GM12878 (cell line): ENCODE measurements at regions of chr13 and their contacts with region 1.

Region 1: GRCh38 chr13:98570929-98571372 is 6.0 kb downstream of the STK24 start:
- DNase-seq: peak; percentile 92
- ATAC-seq: peak; percentile 83
- H3K4me3 ChIP-seq: peak overlapping the region; percentile 87
- H3K27ac ChIP-seq: peak overlapping the region; percentile 73
- H3K4me1 ChIP-seq: peaks cover 42% of the 10 kb centered on the region
- H3K27me3 ChIP-seq: no peaks in the 10 kb centered on the region
- CTCF ChIP-seq: no peak
- EP300 ChIP-seq: peak; percentile 29 to 40; a peak in 2 of 4 replicates
- POLR2A ChIP-seq: no peak
- RAD21 ChIP-seq: no peak

Region 2: DNA sequence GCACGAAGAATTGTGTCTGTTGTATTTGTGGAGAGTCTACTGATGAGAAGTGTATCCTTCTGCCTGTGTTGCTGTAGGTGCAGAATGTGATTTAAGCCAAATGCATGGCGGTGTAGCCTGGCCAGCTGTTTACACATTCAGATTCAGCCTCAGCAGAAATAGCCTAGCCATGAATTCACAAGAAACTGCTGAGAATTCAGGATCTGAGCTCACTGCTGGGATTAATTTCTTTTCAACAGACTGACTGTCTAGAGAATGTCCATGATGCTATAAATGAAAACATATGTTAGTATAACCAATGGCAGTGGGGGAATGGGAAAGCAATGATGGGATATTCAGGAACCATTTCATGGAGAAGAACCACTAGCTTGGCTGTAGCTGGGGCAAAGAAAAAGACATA is 316.4 kb before region 1 on chr13:
- CTCF ChIA-PET with region 1: no interaction called
- POLR2A ChIA-PET with region 1: no interaction called
- RAD21 ChIA-PET with region 1: no interaction called
- SMC1A ChIA-PET with region 1: no interaction called
- in situ Hi-C with region 1: no loop called
- intact Hi-C with region 1: no loop called
- DNase-seq: no peak
- ATAC-seq: no peak
- H3K4me3 ChIP-seq: no peak overlapping the region
- H3K27ac ChIP-seq: no peak overlapping the region
- H3K4me1 ChIP-seq: no peaks in the 10 kb centered on the region
- H3K27me3 ChIP-seq: no peaks in the 10 kb centered on the region
- CTCF ChIP-seq: no peak
- EP300 ChIP-seq: no peak
- POLR2A ChIP-seq: no peak
- RAD21 ChIP-seq: no peak

Region 3: DNA sequence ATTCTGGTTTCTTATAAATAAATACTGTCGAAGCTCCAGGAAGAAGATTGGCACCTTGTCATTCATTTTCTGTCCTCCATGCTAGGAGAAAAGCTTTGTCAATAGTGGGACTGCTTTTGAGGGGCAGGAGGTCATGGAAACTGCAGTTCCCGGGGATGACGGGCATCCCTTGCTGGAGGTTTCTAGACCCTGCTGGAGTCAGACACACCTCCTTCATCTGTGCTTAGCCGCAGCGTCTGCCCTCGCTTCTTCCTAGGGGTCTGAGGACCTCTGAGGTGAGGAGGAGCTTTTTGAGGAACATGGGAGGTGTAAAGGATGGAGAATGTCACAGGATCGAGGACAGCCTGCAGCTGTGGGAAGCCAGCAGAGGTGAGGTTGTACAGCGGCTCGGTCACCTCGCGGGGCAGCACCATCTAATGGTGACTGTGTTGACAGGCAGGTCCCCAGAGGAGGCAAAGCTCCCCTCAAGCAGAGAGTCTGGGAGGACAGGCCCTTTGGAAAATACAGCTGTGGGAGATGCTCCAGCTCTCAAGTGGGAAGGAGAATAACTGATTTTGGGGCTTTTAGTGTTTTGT is 221.1 kb before region 1 on chr13:
- CTCF ChIA-PET with region 1: no interaction called
- POLR2A ChIA-PET with region 1: no interaction called
- RAD21 ChIA-PET with region 1: no interaction called
- SMC1A ChIA-PET with region 1: no interaction called
- in situ Hi-C with region 1: no loop called
- intact Hi-C with region 1: no loop called
- DNase-seq: no peak
- ATAC-seq: peak; percentile 71
- H3K4me3 ChIP-seq: no peak overlapping the region
- H3K27ac ChIP-seq: no peak overlapping the region
- H3K4me1 ChIP-seq: no peaks in the 10 kb centered on the region
- H3K27me3 ChIP-seq: no peaks in the 10 kb centered on the region
- CTCF ChIP-seq: peak; percentile 13 to 38 (median 33); a peak in 3 of 6 replicates
- EP300 ChIP-seq: no peak
- POLR2A ChIP-seq: no peak
- RAD21 ChIP-seq: no peak

Region 4: GRCh38 chr13:98476538-98476966 is 94.4 kb before region 1 on chr13:
- CTCF ChIA-PET with region 1: no interaction called
- POLR2A ChIA-PET with region 1: interaction called, 4 read pairs
- RAD21 ChIA-PET with region 1: interaction called, 10 read pairs
- SMC1A ChIA-PET with region 1: interaction called, 8 read pairs
- in situ Hi-C with region 1: no loop called
- intact Hi-C with region 1: loop called (anchors 2 kb)
- DNase-seq: peak; percentile 90
- ATAC-seq: peak; percentile 94
- H3K4me3 ChIP-seq: peak overlapping the region; percentile 13; the same call in 1 of the 2 replicates
- H3K27ac ChIP-seq: peak overlapping the region; percentile 67
- H3K4me1 ChIP-seq: peaks cover 44% of the 10 kb centered on the region
- H3K27me3 ChIP-seq: no peaks in the 10 kb centered on the region
- CTCF ChIP-seq: no peak
- EP300 ChIP-seq: peak; percentile 96 to 97
- POLR2A ChIP-seq: peak; percentile 70
- RAD21 ChIP-seq: 0 out of 2 replicates have a peak, but pooled peaks have one; percentile 1

Region 5: GRCh38 chr13:98484289-98485219 is 86.4 kb before region 1 on chr13:
- CTCF ChIA-PET with region 1: interaction called, 6 read pairs
- POLR2A ChIA-PET with region 1: interaction called, 10 read pairs
- RAD21 ChIA-PET with region 1: interaction called, 10 read pairs
- SMC1A ChIA-PET with region 1: interaction called, 12 read pairs
- in situ Hi-C with region 1: no loop called
- intact Hi-C with region 1: no loop called
- DNase-seq: no peak
- ATAC-seq: peak; percentile 70
- H3K4me3 ChIP-seq: no peak overlapping the region
- H3K27ac ChIP-seq: peak overlapping the region; percentile 79
- H3K4me1 ChIP-seq: peaks cover 81% of the 10 kb centered on the region
- H3K27me3 ChIP-seq: no peaks in the 10 kb centered on the region
- CTCF ChIP-seq: no peak
- EP300 ChIP-seq: no peak
- POLR2A ChIP-seq: no peak
- RAD21 ChIP-seq: no peak

Region 6: GRCh38 chr13:98509271-98510155 is 61.4 kb before region 1 on chr13:
- CTCF ChIA-PET with region 1: interaction called, 21 read pairs
- POLR2A ChIA-PET with region 1: interaction called, 11 read pairs
- RAD21 ChIA-PET with region 1: interaction called, 35 read pairs
- SMC1A ChIA-PET with region 1: interaction called, 32 read pairs
- in situ Hi-C with region 1: no loop called
- intact Hi-C with region 1: loop called (anchors 1 kb)
- DNase-seq: peak; percentile 79
- ATAC-seq: peak; percentile 67
- H3K4me3 ChIP-seq: no peak overlapping the region
- H3K27ac ChIP-seq: peak overlapping the region; percentile 72
- H3K4me1 ChIP-seq: peaks cover 80% of the 10 kb centered on the region
- H3K27me3 ChIP-seq: no peaks in the 10 kb centered on the region
- CTCF ChIP-seq: no peak
- EP300 ChIP-seq: peak; percentile 49 to 72; a peak in 2 of 4 replicates
- POLR2A ChIP-seq: no peak
- RAD21 ChIP-seq: no peak

Region 7: DNA sequence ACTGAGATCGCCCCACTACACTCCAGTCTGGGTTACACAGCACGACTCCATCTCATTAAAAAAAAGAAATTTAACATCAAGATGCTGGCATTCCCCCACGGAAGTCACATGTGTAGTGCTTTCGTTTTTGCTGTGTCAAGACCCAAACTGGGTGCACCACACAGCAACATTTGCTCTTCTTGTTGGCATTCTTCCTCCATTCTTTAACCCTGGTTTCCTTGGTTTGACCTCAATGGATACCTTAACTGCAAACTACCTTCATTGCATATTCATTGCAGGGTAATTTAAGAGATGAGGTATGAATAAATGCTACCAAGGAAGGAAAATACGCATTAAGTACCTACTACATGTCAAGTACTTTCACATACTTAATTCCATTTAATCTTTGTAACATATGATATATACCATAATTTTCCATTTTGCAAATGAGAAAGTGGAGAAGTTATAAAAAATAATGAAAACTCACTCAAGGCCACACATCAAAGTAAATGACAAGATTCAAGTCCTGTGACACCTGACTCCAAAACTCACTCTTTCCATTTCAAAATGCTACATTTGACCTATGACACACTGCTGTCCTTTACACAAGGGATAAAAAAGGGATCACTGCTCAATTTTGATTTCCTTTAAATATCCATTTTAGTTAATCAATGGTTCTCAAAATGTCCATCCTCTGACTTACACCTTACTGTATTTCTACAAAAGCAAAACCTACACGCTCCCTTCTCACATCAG is 53.2 kb before region 1 on chr13:
- CTCF ChIA-PET with region 1: interaction called, 3 read pairs
- POLR2A ChIA-PET with region 1: interaction called, 7 read pairs
- RAD21 ChIA-PET with region 1: interaction called, 25 read pairs
- SMC1A ChIA-PET with region 1: interaction called, 17 read pairs
- in situ Hi-C with region 1: no loop called
- intact Hi-C with region 1: loop called (anchors 1 kb)
- DNase-seq: peak; percentile 66
- ATAC-seq: peak; percentile 64
- H3K4me3 ChIP-seq: no peak overlapping the region; the same call in 1 of the 2 replicates
- H3K27ac ChIP-seq: peak overlapping the region; percentile 71
- H3K4me1 ChIP-seq: peaks cover 64% of the 10 kb centered on the region
- H3K27me3 ChIP-seq: no peaks in the 10 kb centered on the region
- CTCF ChIP-seq: no peak
- EP300 ChIP-seq: peak in 1 of 2 experiments; percentile 64; a peak in 1 of 4 replicates
- POLR2A ChIP-seq: no peak
- RAD21 ChIP-seq: no peak

Region 8: GRCh38 chr13:98542568-98543377 is 28.2 kb before region 1 on chr13:
- CTCF ChIA-PET with region 1: no interaction called
- POLR2A ChIA-PET with region 1: no interaction called
- RAD21 ChIA-PET with region 1: interaction called, 10 read pairs
- SMC1A ChIA-PET with region 1: interaction called, 11 read pairs
- in situ Hi-C with region 1: no loop called
- intact Hi-C with region 1: no loop called
- DNase-seq: no peak
- ATAC-seq: peak; percentile 58
- H3K4me3 ChIP-seq: peak overlapping the region; percentile 63
- H3K27ac ChIP-seq: peak overlapping the region; percentile 82
- H3K4me1 ChIP-seq: peaks cover 59% of the 10 kb centered on the region
- H3K27me3 ChIP-seq: no peaks in the 10 kb centered on the region
- CTCF ChIP-seq: no peak
- EP300 ChIP-seq: no peak
- POLR2A ChIP-seq: no peak
- RAD21 ChIP-seq: no peak

Region 9: DNA sequence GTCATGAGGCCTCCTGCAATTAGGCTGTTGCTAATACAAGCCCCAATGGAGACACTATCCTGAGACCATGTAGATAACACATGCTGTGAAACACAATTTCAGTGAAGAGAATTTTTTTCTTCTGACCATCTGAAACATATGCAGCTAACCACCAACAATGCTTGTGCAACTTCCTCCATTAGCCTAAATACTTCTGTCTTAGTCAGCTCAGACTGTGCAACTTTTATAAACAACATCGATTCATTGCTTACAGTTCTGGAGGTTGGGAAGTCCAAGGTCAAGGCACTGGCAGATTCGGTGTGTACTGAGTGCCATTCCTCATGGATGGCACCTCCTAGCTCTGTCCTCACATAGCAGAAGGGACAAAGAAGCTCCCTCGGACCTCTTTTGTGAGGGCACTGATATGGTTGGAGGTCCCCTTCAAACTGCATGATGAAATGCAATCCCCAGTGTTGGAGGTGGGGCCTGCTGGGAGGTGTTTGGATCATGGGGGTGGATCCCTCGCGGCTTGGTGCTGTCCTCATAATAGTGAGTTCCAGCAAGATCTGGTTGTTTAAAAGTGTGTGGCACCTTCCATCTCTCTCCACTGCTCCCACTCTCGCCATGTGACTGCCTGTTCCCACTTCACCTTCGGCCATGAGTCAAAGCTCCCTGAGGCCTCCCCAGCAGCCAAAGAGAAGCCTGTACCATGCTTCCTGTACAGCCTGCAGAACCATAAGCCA is 21.8 kb before region 1 on chr13:
- CTCF ChIA-PET with region 1: interaction called, 3 read pairs
- POLR2A ChIA-PET with region 1: no interaction called
- RAD21 ChIA-PET with region 1: interaction called, 10 read pairs
- SMC1A ChIA-PET with region 1: interaction called, 12 read pairs
- in situ Hi-C with region 1: no loop called
- intact Hi-C with region 1: no loop called
- DNase-seq: no peak
- ATAC-seq: peak; percentile 44
- H3K4me3 ChIP-seq: no peak overlapping the region
- H3K27ac ChIP-seq: no peak overlapping the region; the same call in none of the 2 replicates
- H3K4me1 ChIP-seq: peaks cover 29% of the 10 kb centered on the region
- H3K27me3 ChIP-seq: no peaks in the 10 kb centered on the region
- CTCF ChIP-seq: no peak
- EP300 ChIP-seq: no peak
- POLR2A ChIP-seq: no peak
- RAD21 ChIP-seq: no peak

Region 10: GRCh38 chr13:98772794-98773452 is 202.0 kb after region 1 on chr13:
- CTCF ChIA-PET with region 1: no interaction called
- POLR2A ChIA-PET with region 1: no interaction called
- RAD21 ChIA-PET with region 1: no interaction called
- SMC1A ChIA-PET with region 1: no interaction called
- in situ Hi-C with region 1: no loop called
- intact Hi-C with region 1: no loop called
- DNase-seq: no peak
- ATAC-seq: no peak
- H3K4me3 ChIP-seq: no peak overlapping the region
- H3K27ac ChIP-seq: no peak overlapping the region
- H3K4me1 ChIP-seq: no peaks in the 10 kb centered on the region
- H3K27me3 ChIP-seq: no peaks in the 10 kb centered on the region
- CTCF ChIP-seq: no peak; a peak in 1 of 6 replicates
- EP300 ChIP-seq: no peak
- POLR2A ChIP-seq: no peak
- RAD21 ChIP-seq: no peak

Region 11: DNA sequence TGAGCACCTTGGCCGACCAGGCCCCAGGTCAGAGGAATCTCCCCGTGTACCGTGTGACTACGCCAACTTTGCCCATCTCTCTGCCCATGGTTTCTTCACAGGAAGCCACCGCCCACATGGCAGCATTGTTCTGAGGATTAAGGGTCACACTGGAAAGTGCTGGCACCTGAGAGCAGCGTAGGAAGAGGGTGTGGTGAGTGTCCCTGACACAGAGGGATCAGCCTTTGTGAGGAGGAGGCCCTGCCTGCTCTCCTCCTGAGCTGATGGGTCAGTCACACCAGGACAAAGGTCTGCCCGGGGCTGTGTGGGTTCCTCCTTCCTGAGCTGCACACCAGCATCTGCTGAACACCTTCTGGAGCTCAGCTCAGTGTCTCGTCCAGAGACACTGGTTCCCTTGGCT is 213.7 kb after region 1 on chr13:
- CTCF ChIA-PET with region 1: no interaction called
- POLR2A ChIA-PET with region 1: no interaction called
- RAD21 ChIA-PET with region 1: no interaction called
- SMC1A ChIA-PET with region 1: no interaction called
- in situ Hi-C with region 1: no loop called
- intact Hi-C with region 1: no loop called
- DNase-seq: no peak
- ATAC-seq: no peak; the same call in 2 of the 3 replicates
- H3K4me3 ChIP-seq: no peak overlapping the region
- H3K27ac ChIP-seq: no peak overlapping the region
- H3K4me1 ChIP-seq: no peaks in the 10 kb centered on the region
- H3K27me3 ChIP-seq: no peaks in the 10 kb centered on the region
- CTCF ChIP-seq: no peak
- EP300 ChIP-seq: no peak
- POLR2A ChIP-seq: no peak
- RAD21 ChIP-seq: no peak